PC-9 (cell line): ENCODE measurements at regions of chr12 and their contacts with region 1.

Region 1: GRCh38 chr12:57404966-57405640 is 25.7 kb downstream of the R3HDM2 start:
- DNase-seq: no peak
- H3K4me3 ChIP-seq: no peak overlapping the region
- H3K27ac ChIP-seq: no peak overlapping the region
- H3K4me1 ChIP-seq: no peaks in the 10 kb centered on the region
- H3K27me3 ChIP-seq: no peaks in the 10 kb centered on the region
- CTCF ChIP-seq: no peak

Region 2: DNA sequence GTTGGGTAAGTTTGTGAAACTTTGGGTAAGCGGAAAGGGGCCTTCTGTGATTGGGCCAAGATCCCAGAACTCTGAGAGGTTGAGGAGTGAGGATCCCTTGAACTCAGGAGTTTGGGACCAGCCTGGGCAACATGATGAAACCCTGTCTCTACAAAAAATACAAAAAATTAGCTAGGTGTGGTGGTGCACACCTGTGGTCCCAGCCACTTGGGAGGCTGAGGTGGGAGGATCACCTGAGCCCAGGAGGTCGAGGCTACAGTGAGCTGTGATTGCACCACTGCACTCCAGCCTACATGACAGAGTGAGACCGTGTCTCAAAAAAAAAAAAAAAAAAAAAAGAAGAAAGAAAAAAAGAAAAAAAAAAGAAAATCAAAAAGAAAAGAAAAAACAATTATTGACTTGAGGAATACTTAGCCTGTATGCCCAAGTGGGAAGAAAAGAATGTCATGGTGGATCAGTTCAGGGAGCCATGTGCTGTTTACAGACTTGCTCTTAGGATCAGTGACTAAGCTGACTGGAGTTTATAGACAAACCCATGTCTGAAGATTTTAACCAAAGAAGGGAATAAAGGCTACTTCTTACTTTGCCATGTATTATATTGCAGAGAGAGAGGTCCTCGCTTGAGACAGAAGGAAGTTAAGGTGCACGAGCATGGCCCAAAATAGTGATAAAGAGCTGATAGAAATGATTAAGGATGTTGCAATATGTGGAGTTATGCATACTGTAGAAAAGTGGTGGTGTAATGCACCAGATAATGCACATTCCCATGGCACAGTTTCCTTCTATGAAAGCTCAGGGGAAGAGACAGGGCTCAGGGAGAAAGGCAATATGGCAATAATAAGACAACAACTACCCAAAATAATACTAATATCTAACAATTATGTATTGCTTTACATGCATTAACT is 641.1 kb before region 1 on chr12:
- CTCF ChIA-PET with region 1: interaction called, 10 read pairs
- POLR2A ChIA-PET with region 1: no interaction called
- intact Hi-C with region 1: no loop called
- DNase-seq: peak in 1 of 2 experiments; percentile 54
- H3K4me3 ChIP-seq: no peak overlapping the region
- H3K27ac ChIP-seq: no peak overlapping the region
- H3K4me1 ChIP-seq: no peaks in the 10 kb centered on the region
- H3K27me3 ChIP-seq: no peaks in the 10 kb centered on the region
- CTCF ChIP-seq: no peak